ENCODE measurements at regions of chr5 and their contacts with region 1.

Region 1: DNA sequence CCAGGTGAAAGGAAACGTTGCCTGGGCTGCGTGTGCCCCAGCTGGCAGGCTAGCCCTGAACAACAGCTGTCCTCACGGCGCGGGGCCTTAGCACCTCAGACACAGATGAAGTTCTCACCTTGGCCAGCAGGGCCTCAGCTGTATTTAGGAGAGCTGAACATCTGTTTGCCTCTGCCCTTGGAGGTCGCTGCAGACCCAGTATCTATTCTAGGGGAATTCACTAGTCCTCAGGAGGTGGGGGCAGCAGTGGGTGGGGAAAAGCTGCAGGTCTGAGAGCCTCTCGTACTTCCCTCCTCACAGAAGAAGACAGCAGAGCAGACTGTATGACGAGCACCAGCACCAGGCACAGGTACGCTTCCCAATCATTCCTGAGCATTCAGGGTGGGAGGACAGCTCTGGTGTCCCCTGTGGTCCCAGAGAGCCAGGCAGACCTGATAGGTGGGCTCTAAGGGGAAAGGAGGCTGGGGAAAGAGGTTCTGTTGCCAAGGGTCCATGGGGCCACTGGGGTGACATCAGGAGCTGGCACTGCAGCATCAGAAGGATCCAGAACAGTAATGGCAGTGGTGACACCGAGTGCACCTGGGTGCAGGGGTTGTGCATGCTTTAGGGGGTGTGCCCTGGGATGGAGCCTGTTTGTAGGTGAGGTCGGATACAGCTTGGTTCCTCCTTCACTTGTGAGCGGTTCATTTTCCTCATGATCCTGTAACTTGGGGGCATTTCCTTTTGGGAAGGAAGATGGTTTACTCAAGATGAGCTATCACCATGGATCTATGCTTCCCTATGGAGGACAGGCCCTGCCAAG is 13.8 kb downstream of the CD74 start:
- DNase-seq: peak; percentile 40
- ATAC-seq: peak; percentile 65
- H3K4me3 Mint-ChIP-seq: no peak overlapping the region
- H3K27ac Mint-ChIP-seq: peak overlapping the region; percentile 2
- H3K4me1 Mint-ChIP-seq: no peaks in the 10 kb centered on the region
- H3K27me3 Mint-ChIP-seq: no peaks in the 10 kb centered on the region
- CTCF ChIP-seq: peak; percentile 55

Region 2: GRCh38 chr5:150361301-150361700 is 37.6 kb before region 1 on chr5:
- CTCF ChIA-PET with region 1: interaction called, 12 read pairs
- POLR2A ChIA-PET with region 1: interaction called, 9 read pairs
- intact Hi-C with region 1: no loop called
- DNase-seq: no peak
- ATAC-seq: no peak
- H3K4me3 Mint-ChIP-seq: no peak overlapping the region
- H3K27ac Mint-ChIP-seq: no peak overlapping the region
- H3K4me1 Mint-ChIP-seq: peaks cover 40% of the 10 kb centered on the region
- H3K27me3 Mint-ChIP-seq: no peaks in the 10 kb centered on the region
- CTCF ChIP-seq: no peak

Region 3: GRCh38 chr5:150377964-150378694 is 20.8 kb before region 1 on chr5:
- CTCF ChIA-PET with region 1: interaction called, 9 read pairs
- POLR2A ChIA-PET with region 1: interaction called, 15 read pairs
- intact Hi-C with region 1: no loop called
- DNase-seq: no peak
- ATAC-seq: no peak
- H3K4me3 Mint-ChIP-seq: no peak overlapping the region
- H3K27ac Mint-ChIP-seq: peak overlapping the region; percentile 45
- H3K4me1 Mint-ChIP-seq: peaks cover 9% of the 10 kb centered on the region
- H3K27me3 Mint-ChIP-seq: no peaks in the 10 kb centered on the region
- CTCF ChIP-seq: no peak

Region 4: DNA sequence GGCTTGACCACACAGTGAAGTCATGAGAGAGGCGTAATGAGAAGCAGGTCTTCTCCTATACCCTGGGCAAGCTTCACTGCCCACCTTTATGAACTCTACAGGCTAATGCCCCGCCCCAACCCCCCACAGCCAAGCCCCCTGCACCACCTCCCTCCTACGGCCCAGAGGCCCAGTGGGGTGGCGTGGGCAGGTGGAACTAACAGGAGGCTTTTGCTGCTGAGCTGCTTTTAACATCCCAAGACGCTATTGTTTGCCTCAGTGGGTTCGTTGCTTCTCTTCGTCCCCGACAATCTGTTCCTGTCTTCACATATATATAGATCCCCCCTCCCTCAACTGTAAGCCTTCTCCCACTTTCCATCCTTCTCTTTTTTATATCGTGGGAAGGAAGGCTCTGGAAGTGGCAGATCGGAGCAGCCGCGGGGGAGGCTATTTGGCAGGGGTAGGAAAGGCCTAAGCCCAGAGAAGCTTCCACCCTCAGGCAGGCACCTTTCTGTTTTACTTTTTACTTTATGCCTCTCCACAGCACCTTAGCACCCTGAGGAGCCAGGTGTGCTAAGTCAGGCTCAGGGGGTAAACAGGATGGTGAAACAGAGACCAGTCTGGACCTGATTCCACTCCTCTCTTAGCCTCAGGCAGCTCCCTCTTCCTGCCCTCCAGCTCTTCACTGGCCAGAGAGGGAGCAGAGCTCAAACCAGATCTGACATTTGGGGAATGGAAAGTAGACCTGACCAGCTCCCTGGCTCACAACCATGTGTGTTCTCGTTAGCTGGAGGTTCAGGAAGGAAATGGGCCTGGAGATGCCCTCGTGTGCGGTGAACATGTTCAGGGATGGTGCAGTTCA is 12.7 kb before region 1 on chr5:
- CTCF ChIA-PET with region 1: interaction called, 4 read pairs
- POLR2A ChIA-PET with region 1: interaction called, 11 read pairs
- intact Hi-C with region 1: no loop called
- DNase-seq: no peak
- ATAC-seq: no peak
- H3K4me3 Mint-ChIP-seq: no peak overlapping the region
- H3K27ac Mint-ChIP-seq: no peak overlapping the region
- H3K4me1 Mint-ChIP-seq: no peaks in the 10 kb centered on the region
- H3K27me3 Mint-ChIP-seq: no peaks in the 10 kb centered on the region
- CTCF ChIP-seq: no peak

Region 5: GRCh38 chr5:150409638-150410523 is 11.0 kb after region 1 on chr5:
- CTCF ChIA-PET with region 1: interaction called, 40 read pairs
- POLR2A ChIA-PET with region 1: interaction called, 57 read pairs
- intact Hi-C with region 1: no loop called
- DNase-seq: peak; percentile 55
- ATAC-seq: no peak
- H3K4me3 Mint-ChIP-seq: peak overlapping the region; percentile 97
- H3K27ac Mint-ChIP-seq: peak overlapping the region; percentile 99
- H3K4me1 Mint-ChIP-seq: peaks cover 39% of the 10 kb centered on the region
- H3K27me3 Mint-ChIP-seq: no peaks in the 10 kb centered on the region
- CTCF ChIP-seq: no peak

Region 6: DNA sequence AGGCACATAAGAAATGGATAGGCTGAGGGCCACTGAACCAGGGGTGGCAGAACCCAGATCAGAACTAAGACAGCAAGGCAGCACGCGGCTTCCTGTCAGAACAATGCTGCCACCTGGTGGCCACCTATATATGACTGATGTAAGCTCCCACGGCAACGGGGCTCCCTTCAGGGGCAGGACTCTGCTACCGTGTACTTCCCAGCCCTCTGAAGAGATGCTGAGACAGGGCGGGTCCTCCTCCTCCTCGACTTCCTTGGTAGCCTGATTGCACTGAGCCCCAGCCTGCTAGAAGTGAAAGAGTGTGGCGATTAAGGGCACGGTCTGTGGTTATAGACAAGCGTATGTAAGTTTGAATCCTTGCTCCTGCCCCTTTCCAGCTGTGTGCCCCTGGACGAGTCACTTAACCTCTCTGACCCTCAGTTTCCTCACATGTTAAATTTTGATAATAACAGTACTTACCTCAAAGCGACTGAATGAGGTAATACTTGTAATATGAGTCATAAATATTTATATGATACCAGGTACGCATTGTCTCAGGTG is 37.3 kb after region 1 on chr5:
- CTCF ChIA-PET with region 1: interaction called, 43 read pairs
- POLR2A ChIA-PET with region 1: interaction called, 3 read pairs
- intact Hi-C with region 1: loop called (anchors 5 kb)
- DNase-seq: peak; percentile 98
- ATAC-seq: peak; percentile 96
- H3K4me3 Mint-ChIP-seq: no peak overlapping the region
- H3K27ac Mint-ChIP-seq: peak overlapping the region; percentile 67
- H3K4me1 Mint-ChIP-seq: peaks cover 10% of the 10 kb centered on the region
- H3K27me3 Mint-ChIP-seq: no peaks in the 10 kb centered on the region
- CTCF ChIP-seq: peak; percentile 72

Region 7: DNA sequence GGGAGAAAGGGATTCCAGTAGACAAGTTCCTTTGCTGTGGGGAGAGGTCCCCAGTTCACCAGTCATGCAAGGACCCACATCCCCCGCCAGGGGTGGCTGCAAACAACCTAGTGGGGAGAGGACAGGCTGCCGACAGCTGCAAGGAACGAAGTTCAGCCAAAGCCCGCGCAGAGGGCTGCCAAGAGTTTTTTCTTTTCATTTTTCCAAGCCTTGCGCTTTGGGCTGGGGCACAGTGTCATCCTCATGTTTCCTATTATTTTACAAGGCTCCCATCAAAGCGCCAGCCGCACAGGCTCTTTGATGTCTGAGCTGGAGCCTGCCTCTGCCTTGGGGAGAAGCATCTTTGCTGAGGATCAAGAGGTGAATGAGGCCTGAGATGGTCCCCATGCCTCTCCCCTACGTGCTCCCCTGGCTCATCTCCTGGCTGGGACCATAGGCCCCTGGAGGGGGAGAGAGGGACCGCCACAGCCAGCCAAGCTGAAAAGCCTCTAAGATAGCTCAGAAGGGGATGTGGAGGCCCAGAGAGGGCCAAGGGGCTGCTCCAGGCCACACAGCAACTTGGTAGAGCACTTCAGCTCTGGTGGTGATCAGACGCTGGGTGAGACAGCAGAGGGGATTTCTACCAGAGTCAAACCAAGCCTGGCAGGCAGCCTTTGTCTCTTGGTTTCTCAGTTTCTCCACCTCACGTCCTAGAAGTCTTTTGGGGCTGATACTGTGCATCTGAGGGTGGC is 191.1 kb after region 1 on chr5:
- CTCF ChIA-PET with region 1: no interaction called
- POLR2A ChIA-PET with region 1: no interaction called
- intact Hi-C with region 1: no loop called
- DNase-seq: no peak
- ATAC-seq: peak; percentile 24
- H3K4me3 Mint-ChIP-seq: no peak overlapping the region
- H3K27ac Mint-ChIP-seq: no peak overlapping the region
- H3K4me1 Mint-ChIP-seq: no peaks in the 10 kb centered on the region
- H3K27me3 Mint-ChIP-seq: no peaks in the 10 kb centered on the region
- CTCF ChIP-seq: no peak